ENCODE measurements at regions of chr16 and their contacts with region 1.

Region 1: DNA sequence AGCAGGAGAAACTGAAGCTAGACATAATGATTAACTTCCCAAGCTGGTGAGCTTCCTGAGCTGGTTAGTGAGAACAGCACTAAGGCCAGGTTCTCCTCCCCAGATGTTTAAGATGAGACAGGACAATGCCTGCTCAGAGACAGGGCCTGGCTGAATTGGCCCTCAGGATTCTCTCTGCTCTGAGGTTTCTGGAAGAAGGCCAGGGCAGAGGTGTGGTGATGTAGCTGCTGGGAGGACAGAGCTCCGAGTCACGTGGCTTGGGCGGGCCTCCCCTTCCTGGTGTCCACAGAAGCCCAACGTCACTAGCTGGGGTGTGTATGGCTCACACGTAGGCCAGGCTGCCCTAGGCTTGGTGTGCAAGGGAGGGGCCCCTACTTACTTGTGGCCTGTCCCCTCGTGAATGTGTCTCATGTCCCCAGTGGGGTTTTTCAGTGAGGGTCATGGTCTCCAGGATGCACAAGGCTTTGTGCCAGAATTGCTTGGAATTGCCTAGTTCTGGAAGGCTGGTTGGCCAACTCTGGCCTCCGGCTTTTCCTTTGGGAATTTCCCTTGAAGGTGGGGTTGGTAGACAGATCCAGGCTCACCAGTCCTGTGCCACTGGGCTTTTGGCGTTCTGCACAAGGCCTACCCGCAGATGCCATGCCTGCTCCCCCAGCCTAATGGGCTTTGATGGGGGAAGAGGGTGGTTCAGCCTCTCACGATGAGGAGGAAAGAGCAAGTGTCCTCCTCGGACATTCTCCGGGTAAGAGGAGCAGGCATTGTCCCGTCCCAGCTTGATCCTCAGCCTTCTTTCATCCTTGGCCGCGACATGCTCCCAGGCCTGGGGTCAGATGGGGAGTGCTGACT is 3.4 kb downstream of the NOD2 start:
- H3K4me3 Mint-ChIP-seq: peak overlapping the region; percentile 91
- H3K27ac Mint-ChIP-seq: peak overlapping the region; percentile 91
- H3K4me1 Mint-ChIP-seq: peaks cover 90% of the 10 kb centered on the region
- H3K27me3 Mint-ChIP-seq: no peaks in the 10 kb centered on the region

Region 2: GRCh38 chr16:50274326-50275095 is 422.3 kb before region 1 on chr16:
- intact Hi-C with region 1: loop called (anchors 5 kb)
- H3K4me3 Mint-ChIP-seq: peak overlapping the region; percentile 96
- H3K27ac Mint-ChIP-seq: peak overlapping the region; percentile 90
- H3K4me1 Mint-ChIP-seq: peaks cover 91% of the 10 kb centered on the region
- H3K27me3 Mint-ChIP-seq: no peaks in the 10 kb centered on the region

Region 3: GRCh38 chr16:50635505-50636392 is 61.0 kb before region 1 on chr16:
- intact Hi-C with region 1: no loop called
- H3K4me3 Mint-ChIP-seq: no peak overlapping the region
- H3K27ac Mint-ChIP-seq: no peak overlapping the region
- H3K4me1 Mint-ChIP-seq: no peaks in the 10 kb centered on the region
- H3K27me3 Mint-ChIP-seq: no peaks in the 10 kb centered on the region

Region 4: DNA sequence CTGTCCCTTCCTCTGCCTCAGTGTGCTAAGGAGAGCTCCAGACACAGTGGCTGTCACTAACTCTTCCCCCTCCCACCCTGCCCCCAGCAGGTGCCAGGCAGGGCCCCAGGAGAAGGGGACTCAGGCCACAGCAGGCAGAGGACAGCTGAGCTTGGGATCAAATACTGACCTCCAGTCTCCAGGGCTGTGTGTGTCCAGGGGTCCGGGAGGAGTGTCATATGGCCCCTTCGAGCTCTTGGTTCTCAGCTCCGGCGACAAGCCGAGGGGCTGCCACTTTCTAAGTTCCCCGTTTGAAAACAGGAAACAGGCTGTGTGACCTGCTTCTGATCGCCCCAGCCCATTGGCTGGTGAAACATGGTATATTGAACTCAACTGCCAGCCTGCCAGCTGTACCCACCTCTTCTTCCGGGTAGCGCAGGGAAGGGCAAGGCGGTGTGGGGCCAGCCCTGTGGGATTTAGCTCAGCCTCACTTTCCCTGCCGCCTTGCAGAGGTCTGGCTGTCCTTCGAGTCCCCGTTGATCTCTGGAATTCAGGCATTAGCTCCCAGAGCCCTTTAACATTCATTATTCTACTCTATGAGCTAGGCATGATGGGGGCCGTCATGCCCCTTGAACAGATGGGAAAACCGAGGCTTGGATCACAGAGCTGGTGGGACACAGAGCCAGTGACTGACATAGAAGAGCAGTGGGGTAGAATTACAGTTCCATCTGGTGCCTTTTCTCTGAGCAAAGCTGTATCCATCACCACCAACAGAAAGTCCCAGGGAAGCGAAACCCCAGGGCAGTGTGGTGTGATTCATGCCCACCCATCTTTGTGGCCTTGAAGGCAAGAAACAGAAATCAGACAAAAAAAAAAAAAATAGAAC is 15.5 kb before region 1 on chr16 and contains the start of gene SNX20:
- intact Hi-C with region 1: loop called (anchors 1 kb)
- H3K4me3 Mint-ChIP-seq: peak within 1 kb of the TSS; percentile 90
- H3K27ac Mint-ChIP-seq: peak within 1 kb of the TSS; percentile 90
- H3K4me1 Mint-ChIP-seq: peaks cover 80% of the 10 kb centered on the region
- H3K27me3 Mint-ChIP-seq: no peaks in the 10 kb centered on the region

Region 5: GRCh38 chr16:50709053-50709684 is 12.4 kb after region 1 on chr16:
- intact Hi-C with region 1: loop called (anchors 1 kb)
- H3K4me3 Mint-ChIP-seq: peak overlapping the region; percentile 64
- H3K27ac Mint-ChIP-seq: peak overlapping the region; percentile 99
- H3K4me1 Mint-ChIP-seq: peaks cover 95% of the 10 kb centered on the region
- H3K27me3 Mint-ChIP-seq: no peaks in the 10 kb centered on the region

Measured in dendritic cell treated with granulocyte-macrophage colony-stimulating factor and Interleukin-4, amounts not matched to agents 40 ng/mL and 50 ng/mL, for 4 days (primary cell).